Right ventricle myocardium inferior (tissue), 1 donor: ENCODE measurements at regions of chr1 and their contacts with region 1.

Region 1: DNA sequence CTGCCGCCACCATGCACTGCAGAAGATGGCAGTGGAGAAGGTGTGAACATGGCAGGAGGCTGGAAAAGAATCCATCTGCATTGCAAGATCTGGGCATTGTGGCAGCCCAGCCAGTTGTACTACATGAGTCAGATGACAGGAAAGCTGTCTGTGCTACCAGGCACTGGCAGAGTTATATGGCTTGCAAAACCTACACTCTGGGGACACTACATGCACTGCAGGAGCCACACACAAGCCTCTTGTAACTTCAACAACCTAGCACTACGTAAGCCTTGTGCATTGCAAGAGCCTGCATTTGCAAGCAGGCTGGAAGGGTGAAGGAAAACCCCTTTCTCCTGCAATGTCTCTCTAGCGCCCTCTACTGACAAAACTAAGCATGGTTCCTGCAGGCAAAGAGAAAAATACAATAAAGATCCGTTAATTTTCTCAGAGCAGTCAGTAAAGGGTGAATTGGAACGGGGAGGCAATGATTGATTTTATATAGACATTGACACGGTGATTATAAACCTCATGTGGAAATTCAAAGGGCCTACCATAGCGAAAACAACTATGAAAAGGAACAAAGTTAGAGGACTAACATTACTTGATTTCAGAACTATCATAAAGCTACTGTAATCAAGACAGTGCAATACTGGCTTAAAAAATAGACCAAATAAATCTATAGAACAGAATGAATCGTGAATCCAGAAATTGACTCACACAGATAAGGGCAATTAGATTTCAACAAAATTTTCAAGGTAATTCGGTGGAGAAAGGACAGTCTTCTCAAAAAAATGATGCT is 26.2 kb upstream of the DYNLT5 start:
- DNase-seq: no peak
- ATAC-seq: peak; percentile 64

Region 2: GRCh38 chr1:65958561-65959350 is 767.3 kb before region 1 on chr1:
- intact Hi-C with region 1: loop called (anchors 5 kb)
- DNase-seq: no peak
- ATAC-seq: no peak

Region 3: DNA sequence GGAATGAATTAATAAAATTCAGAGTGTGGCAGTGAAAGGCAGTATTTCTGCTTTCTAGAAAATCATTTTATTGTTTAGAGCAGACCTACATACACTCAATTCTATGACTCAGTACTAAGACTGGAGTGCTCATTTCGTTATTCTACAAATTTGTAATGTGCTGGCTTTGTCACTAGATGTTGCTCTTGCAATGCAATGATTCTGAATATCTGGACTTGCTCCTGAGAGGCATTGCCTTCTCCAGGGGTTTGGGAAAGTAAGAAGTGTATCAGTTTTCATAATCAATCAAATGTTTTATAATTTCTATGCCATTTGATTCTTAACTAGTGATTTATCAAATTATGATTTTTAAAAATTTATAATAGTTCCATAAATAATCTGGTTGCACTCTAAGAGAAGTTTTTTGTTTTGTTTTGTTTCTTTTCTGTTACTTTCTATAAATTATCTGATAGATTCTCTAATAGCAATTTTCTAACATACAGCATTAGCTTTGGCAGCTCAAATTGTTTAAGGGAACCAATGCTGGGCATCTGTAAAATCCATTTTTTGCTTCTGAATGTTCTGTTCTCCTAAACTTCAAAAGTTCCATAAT is 472.6 kb before region 1 on chr1:
- intact Hi-C with region 1: loop called (anchors 10 kb)
- DNase-seq: no peak
- ATAC-seq: peak; percentile 85

Region 4: GRCh38 chr1:66503841-66504470 is 222.1 kb before region 1 on chr1:
- intact Hi-C with region 1: loop called (anchors 10 kb)
- DNase-seq: no peak
- ATAC-seq: peak; percentile 64